Motor neuron (in vitro differentiated cells): ENCODE measurements at regions of chr1 and their contacts with region 1.

Region 1: GRCh38 chr1:98468111-98468717 is 193.3 kb upstream of the SNX7 start:
- ATAC-seq: peak in 4 of 8 experiments; percentile 28 to 46 (median 40)
- H3K4me3 ChIP-seq: no peak overlapping the region
- H3K27ac ChIP-seq: no peak overlapping the region
- H3K4me1 ChIP-seq: peaks cover 0 to 11% of the 10 kb centered on the region in 2 donors

Region 2: GRCh38 chr1:98086796-98087441 is 381.3 kb before region 1 on chr1:
- in situ Hi-C with region 1: loop called in 1 of 9 experiments (anchors 25 kb)
- ATAC-seq: peak; percentile 65 to 100 (median 96)
- H3K4me3 ChIP-seq: no peak overlapping the region
- H3K27ac ChIP-seq: no peak overlapping the region
- H3K4me1 ChIP-seq: peaks cover 0 to 3% of the 10 kb centered on the region in 2 donors

Region 3: DNA sequence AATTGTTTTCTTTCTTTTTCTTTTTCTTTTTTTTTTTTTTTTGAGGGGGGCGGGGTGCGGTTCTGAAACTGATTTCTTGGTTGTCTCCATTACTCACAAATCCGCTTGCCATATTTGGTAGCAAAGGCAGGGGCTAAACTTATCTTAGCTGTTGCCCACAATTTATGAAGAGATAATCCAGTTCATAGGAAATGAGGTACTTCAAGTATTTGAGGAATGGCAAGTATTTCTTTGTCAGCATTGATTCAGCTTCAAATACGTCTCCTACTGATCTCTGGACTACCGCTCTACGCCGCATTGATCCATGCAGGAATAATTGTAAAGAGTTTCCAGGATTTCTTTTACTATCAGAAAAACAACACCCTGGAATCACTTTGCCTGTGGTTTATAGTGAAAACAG is 258.1 kb before region 1 on chr1:
- in situ Hi-C with region 1: no loop called
- ATAC-seq: peak in 1 of 8 experiments; percentile 50
- H3K4me3 ChIP-seq: no peak overlapping the region
- H3K27ac ChIP-seq: no peak overlapping the region
- H3K4me1 ChIP-seq: peaks cover 2 to 14% of the 10 kb centered on the region in 2 donors

Region 4: DNA sequence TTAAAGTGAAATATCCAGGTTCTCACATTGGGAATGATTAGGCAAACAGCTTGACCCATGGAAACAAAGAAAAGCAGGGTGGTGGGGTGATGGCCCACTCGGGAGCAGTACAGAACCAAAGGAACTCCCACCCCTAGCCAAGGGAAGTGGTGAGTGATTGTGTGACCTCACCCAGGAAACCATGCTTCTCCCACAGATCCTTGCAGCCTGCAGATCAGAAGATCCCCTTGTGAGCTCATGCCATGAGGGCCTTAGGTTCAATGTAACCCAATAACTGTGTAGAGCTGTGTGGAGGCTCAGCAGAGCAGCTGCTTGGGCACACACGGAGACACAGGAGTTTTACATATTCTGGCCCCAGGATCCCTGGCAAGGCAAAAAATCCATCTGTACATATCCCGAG is 235.5 kb before region 1 on chr1:
- in situ Hi-C with region 1: loop called in 1 of 9 experiments (anchors 25 kb)
- ATAC-seq: no peak
- H3K4me3 ChIP-seq: no peak overlapping the region
- H3K27ac ChIP-seq: no peak overlapping the region
- H3K4me1 ChIP-seq: no peaks in the 10 kb centered on the region